ENCODE measurements at regions of chr1 and their contacts with region 1.

Region 1: GRCh38 chr1:244272471-244273261 is 179.0 kb downstream of the ADSS2 start:
- DNase-seq: peak in 4 of 5 donors; percentile 40 to 68 (median 56)
- ATAC-seq: peak; percentile 52 to 89 (median 85)
- H3K4me3 ChIP-seq: no peak overlapping the region
- H3K27ac ChIP-seq: peak overlapping the region in 3 of 12 donors; percentile 7 to 32 (median 16)
- H3K4me1 ChIP-seq: peaks cover 0 to 16% (median 0%) of the 10 kb centered on the region in 12 donors
- H3K27me3 ChIP-seq: no peaks in the 10 kb centered on the region
- CTCF ChIP-seq: peak; percentile 87 to 99 (median 93)
- POLR2A ChIP-seq: no peak

Region 2: GRCh38 chr1:243343970-243344937 is 928.4 kb before region 1 on chr1:
- intact Hi-C with region 1: loop called (anchors 1 to 5 kb)
- DNase-seq: no peak
- ATAC-seq: no peak
- H3K4me3 ChIP-seq: no peak overlapping the region
- H3K27ac ChIP-seq: no peak overlapping the region
- H3K4me1 ChIP-seq: peaks cover 0 to 9% (median 0%) of the 10 kb centered on the region in 12 donors
- H3K27me3 ChIP-seq: no peaks in the 10 kb centered on the region
- CTCF ChIP-seq: peak; percentile 61 to 84 (median 80)
- POLR2A ChIP-seq: no peak

Region 3: DNA sequence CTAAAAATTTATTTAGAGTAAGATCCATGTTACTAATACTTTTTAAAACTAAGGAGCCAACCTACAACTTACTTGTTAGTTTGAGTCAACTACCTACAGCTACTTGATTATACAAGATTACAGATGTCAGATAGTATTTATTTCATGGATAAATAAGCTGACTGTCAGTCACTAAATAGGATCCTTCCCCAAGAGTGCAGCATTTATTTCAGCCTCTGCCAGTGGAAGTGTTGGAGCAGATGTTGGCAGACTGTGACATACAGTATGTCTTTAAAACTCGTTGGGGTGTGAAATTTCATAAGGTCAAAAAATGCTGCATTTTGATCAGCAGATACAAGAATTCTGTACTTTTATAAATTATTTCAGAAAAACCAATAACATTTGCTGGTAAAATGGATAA is 578.9 kb before region 1 on chr1:
- intact Hi-C with region 1: loop called in 1 of 10 experiments (anchors 10 kb)
- DNase-seq: no peak
- ATAC-seq: no peak
- H3K4me3 ChIP-seq: no peak overlapping the region
- H3K27ac ChIP-seq: no peak overlapping the region
- H3K4me1 ChIP-seq: no peaks in the 10 kb centered on the region
- H3K27me3 ChIP-seq: no peaks in the 10 kb centered on the region
- CTCF ChIP-seq: no peak
- POLR2A ChIP-seq: no peak

Region 4: GRCh38 chr1:243850452-243851256 is 422.0 kb before region 1 on chr1:
- intact Hi-C with region 1: loop called in 2 of 10 experiments (anchors 5 to 10 kb)
- DNase-seq: peak; percentile 80 to 87 (median 83)
- ATAC-seq: peak; percentile 22 to 70 (median 66)
- H3K4me3 ChIP-seq: peak overlapping the region; percentile 73 to 90 (median 80)
- H3K27ac ChIP-seq: peak overlapping the region; percentile 90 to 98 (median 94)
- H3K4me1 ChIP-seq: peaks cover 0 to 24% (median 8%) of the 10 kb centered on the region in 12 donors
- H3K27me3 ChIP-seq: peaks cover 0 to 24% (median 0%) of the 10 kb centered on the region in 9 donors
- CTCF ChIP-seq: no peak
- POLR2A ChIP-seq: peak in 1 of 2 donors; percentile 24

Region 5: DNA sequence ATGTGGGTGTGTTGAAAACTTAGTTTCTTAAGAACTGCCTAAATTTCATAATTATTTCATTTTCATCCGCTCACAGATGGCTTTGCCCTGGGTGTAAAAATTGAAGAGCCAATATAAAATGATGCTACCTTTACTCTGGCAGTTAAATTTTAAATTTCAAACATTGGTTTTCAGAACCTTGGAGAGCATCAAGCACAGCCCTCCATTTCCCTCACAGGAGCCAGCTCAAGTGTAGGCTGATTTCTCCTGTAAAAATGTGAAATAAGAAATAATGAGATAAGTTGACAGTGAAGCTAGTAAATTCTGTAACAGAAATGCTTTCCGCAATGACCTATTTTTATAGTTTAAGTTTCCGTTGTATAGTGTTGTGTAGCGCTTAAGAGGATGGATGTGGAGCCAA is 368.8 kb before region 1 on chr1:
- intact Hi-C with region 1: no loop called
- DNase-seq: no peak
- ATAC-seq: no peak
- H3K4me3 ChIP-seq: no peak overlapping the region
- H3K27ac ChIP-seq: no peak overlapping the region
- H3K4me1 ChIP-seq: no peaks in the 10 kb centered on the region
- H3K27me3 ChIP-seq: peaks cover 0 to 6% (median 0%) of the 10 kb centered on the region in 9 donors
- CTCF ChIP-seq: no peak
- POLR2A ChIP-seq: no peak

Region 6: GRCh38 chr1:243996223-243996622 is 276.4 kb before region 1 on chr1:
- intact Hi-C with region 1: loop called in 1 of 10 experiments (anchors 5 kb)
- DNase-seq: no peak
- ATAC-seq: peak in 1 of 4 donors; percentile 30
- H3K4me3 ChIP-seq: no peak overlapping the region
- H3K27ac ChIP-seq: no peak overlapping the region
- H3K4me1 ChIP-seq: no peaks in the 10 kb centered on the region
- H3K27me3 ChIP-seq: no peaks in the 10 kb centered on the region
- CTCF ChIP-seq: no peak
- POLR2A ChIP-seq: no peak

Region 7: DNA sequence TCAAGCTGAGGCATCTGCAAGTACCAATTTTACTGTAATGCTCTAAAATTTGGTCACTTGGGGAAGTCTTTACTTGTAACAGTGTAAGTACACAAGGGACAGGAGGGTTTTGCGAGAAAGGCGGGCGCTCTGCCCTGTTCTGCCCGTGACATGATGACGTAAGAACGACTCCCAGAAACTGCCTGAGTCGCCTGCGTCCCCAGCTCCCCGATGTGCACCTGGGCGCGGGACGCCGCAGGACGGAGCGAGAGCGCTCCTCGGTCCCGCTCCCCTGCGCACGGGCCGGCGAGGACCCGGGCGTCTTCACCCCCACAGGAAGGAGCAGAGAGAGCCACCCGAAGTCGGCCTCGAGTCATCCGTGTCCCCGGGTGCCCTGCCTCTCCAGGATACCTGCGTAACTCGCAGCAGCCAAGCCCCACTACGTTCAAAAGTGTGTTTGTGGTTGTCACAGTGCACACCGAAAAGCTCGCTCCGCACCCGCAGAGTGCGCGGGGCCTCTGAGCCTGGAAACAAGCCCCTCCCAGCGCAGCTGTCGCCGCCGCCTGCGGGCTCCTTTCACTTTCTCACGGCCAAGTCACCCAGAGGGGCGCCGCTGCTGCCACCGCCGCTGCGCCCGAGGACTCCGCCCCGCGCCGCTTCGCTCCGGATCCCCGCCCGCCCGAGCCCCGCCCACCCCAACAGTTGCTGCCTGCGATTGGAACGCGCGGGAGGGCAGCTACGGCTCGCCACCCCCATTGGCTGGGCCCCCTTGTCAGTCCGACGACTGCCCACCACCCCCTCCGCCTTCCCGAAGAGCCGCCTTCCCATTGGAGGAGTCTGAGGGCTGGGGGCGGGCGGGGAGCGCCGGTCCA is 224.8 kb before region 1 on chr1:
- intact Hi-C with region 1: loop called in 5 of 10 experiments (anchors 1 to 10 kb)
- DNase-seq: peak; percentile 99 to 100 (median 100)
- ATAC-seq: peak; percentile 97 to 99 (median 98)
- H3K4me3 ChIP-seq: peak overlapping the region; percentile 70 to 97 (median 85)
- H3K27ac ChIP-seq: peak overlapping the region; percentile 95 to 100 (median 98)
- H3K4me1 ChIP-seq: peaks cover 8 to 39% (median 24%) of the 10 kb centered on the region in 12 donors
- H3K27me3 ChIP-seq: no peaks in the 10 kb centered on the region
- CTCF ChIP-seq: peak in 1 of 12 donors; percentile 9
- POLR2A ChIP-seq: peak; percentile 77 to 98

Region 8: GRCh38 chr1:244302889-244303613 is 30.4 kb after region 1 on chr1:
- intact Hi-C with region 1: no loop called
- DNase-seq: no peak
- ATAC-seq: no peak
- H3K4me3 ChIP-seq: no peak overlapping the region
- H3K27ac ChIP-seq: peak overlapping the region in 1 of 12 donors; percentile 80
- H3K4me1 ChIP-seq: peaks cover 0 to 33% (median 1%) of the 10 kb centered on the region in 12 donors
- H3K27me3 ChIP-seq: no peaks in the 10 kb centered on the region
- CTCF ChIP-seq: no peak
- POLR2A ChIP-seq: no peak